Naive thymus-derived CD4-positive, alpha-beta T cell (primary cell): ENCODE measurements at regions of chr14 and their contacts with region 1.

Region 1: GRCh38 chr14:97602438-97603117 is 805.4 kb downstream of the VRK1 start:
- DNase-seq: peak; percentile 39 to 92 (median 89)
- ATAC-seq: peak; percentile 94
- H3K4me3 ChIP-seq: peak overlapping the region; percentile 37
- H3K4me3 Mint-ChIP-seq: no peak overlapping the region
- H3K27ac ChIP-seq: peak overlapping the region; percentile 80
- H3K27ac Mint-ChIP-seq: no peak overlapping the region
- H3K4me1 ChIP-seq: peaks cover 57 to 64% of the 10 kb centered on the region in 2 donors
- H3K4me1 Mint-ChIP-seq: peaks cover 0 to 31% (median 4%) of the 10 kb centered on the region in 7 donors
- H3K27me3 ChIP-seq: no peaks in the 10 kb centered on the region
- H3K27me3 Mint-ChIP-seq: no peaks in the 10 kb centered on the region

Region 2: DNA sequence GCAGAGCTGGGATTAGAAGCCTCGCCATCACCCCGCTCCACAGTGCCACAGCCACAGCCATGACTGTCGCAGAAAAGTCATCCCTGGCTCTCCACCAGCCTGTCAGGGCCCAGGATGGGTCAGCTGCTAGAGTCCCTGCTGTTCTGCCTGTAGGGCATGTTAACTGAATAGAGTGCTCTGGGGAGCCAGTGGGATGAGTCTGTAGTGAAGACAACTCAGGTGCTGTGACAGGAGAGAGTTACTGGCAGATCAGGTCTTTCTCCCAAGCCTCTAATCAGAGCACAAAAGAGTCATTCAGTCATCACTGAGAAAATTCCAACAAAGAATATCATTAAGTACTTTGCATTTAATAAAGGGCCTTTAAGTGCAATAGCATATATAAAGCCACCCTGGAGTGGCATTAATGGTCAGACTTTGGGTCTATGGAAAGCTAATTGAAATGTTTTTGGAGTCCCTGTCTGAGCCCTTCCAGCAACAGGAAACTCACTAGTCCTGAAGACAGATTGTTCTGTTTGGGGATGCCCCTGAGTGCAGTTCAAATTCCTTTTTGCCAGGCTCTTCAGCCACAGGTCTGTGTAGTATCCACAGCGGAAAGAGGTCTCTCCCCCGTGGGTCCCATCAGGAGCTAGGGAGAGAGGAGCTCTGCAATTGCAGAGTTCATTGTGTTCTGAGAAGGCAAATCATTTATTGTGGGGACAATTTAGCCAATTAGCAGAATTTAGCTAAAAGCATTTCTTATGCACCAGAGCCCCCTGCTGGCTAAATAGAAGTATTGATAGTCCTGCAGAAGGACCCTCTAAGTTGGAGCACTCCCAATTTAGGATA is 1608.6 kb before region 1 on chr14:
- CTCF ChIA-PET with region 1: no interaction called
- POLR2A ChIA-PET with region 1: no interaction called
- intact Hi-C with region 1: no loop called
- DNase-seq: peak in 7 of 9 donors; percentile 5 to 45 (median 37)
- ATAC-seq: no peak
- H3K4me3 ChIP-seq: no peak overlapping the region
- H3K4me3 Mint-ChIP-seq: no peak overlapping the region
- H3K27ac ChIP-seq: no peak overlapping the region
- H3K27ac Mint-ChIP-seq: no peak overlapping the region
- H3K4me1 ChIP-seq: no peaks in the 10 kb centered on the region
- H3K4me1 Mint-ChIP-seq: no peaks in the 10 kb centered on the region
- H3K27me3 ChIP-seq: no peaks in the 10 kb centered on the region
- H3K27me3 Mint-ChIP-seq: peaks cover 17 to 70% (median 55%) of the 10 kb centered on the region in 5 donors

Region 3: DNA sequence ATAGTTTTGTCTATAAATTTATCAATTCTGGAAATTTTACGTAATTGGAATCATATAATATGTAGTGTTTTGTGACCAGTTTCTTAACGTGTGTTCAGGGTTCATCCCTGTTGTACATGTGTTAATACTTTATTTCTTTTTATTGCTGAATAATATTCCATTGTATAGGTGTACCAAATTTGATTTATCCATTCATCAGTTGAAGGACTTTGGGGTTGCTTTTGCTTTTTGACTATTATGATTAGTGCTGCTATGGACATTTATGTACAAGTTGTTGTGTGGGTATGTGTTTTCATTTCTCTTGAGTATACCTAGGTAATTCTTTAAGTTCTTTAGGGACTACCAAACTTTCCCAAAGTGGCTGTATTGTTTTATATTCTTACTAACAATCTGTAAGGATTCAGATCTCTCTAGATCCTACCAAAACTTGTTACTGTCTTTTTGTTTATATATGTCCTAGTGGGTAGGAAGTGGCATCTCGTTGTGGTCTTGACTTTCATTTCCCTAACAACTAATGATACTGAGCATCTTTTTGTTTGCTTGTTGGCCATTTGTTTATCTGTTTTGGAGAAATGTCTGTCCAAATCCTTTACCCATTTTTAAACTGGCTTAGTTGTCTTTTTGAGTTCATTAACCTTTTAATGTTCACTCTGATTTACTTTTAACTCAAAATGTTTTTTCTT is 790.5 kb before region 1 on chr14:
- CTCF ChIA-PET with region 1: no interaction called
- POLR2A ChIA-PET with region 1: no interaction called
- intact Hi-C with region 1: no loop called
- DNase-seq: no peak
- ATAC-seq: no peak
- H3K4me3 ChIP-seq: no peak overlapping the region
- H3K4me3 Mint-ChIP-seq: peak overlapping the region in 2 of 10 donors; percentile 4 to 15
- H3K27ac ChIP-seq: no peak overlapping the region
- H3K27ac Mint-ChIP-seq: no peak overlapping the region
- H3K4me1 ChIP-seq: peaks cover 0 to 12% of the 10 kb centered on the region in 2 donors
- H3K4me1 Mint-ChIP-seq: peaks cover 25 to 64% (median 51%) of the 10 kb centered on the region in 7 donors
- H3K27me3 ChIP-seq: no peaks in the 10 kb centered on the region
- H3K27me3 Mint-ChIP-seq: no peaks in the 10 kb centered on the region

Region 4: GRCh38 chr14:97177015-97177414 is 425.6 kb before region 1 on chr14:
- CTCF ChIA-PET with region 1: no interaction called
- POLR2A ChIA-PET with region 1: no interaction called
- intact Hi-C with region 1: loop called in 1 of 2 experiments (anchors 1 kb)
- DNase-seq: peak in 7 of 9 donors; percentile 36 to 63 (median 49)
- ATAC-seq: peak; percentile 67
- H3K4me3 ChIP-seq: no peak overlapping the region
- H3K4me3 Mint-ChIP-seq: peak overlapping the region in 4 of 10 donors; percentile 28 to 51 (median 36)
- H3K27ac ChIP-seq: no peak overlapping the region
- H3K27ac Mint-ChIP-seq: peak overlapping the region in 5 of 9 donors; percentile 32 to 78 (median 63)
- H3K4me1 ChIP-seq: peaks cover 0 to 3% of the 10 kb centered on the region in 2 donors
- H3K4me1 Mint-ChIP-seq: peaks cover 0 to 41% (median 32%) of the 10 kb centered on the region in 7 donors
- H3K27me3 ChIP-seq: no peaks in the 10 kb centered on the region
- H3K27me3 Mint-ChIP-seq: peaks cover 0 to 2% (median 0%) of the 10 kb centered on the region in 5 donors

Region 5: GRCh38 chr14:97410667-97411620 is 191.6 kb before region 1 on chr14:
- CTCF ChIA-PET with region 1: no interaction called
- POLR2A ChIA-PET with region 1: interaction called, 4 read pairs
- intact Hi-C with region 1: loop called in 1 of 2 experiments (anchors 2 kb)
- DNase-seq: peak in 1 of 9 donors; percentile 9
- ATAC-seq: no peak
- H3K4me3 ChIP-seq: no peak overlapping the region
- H3K4me3 Mint-ChIP-seq: no peak overlapping the region
- H3K27ac ChIP-seq: no peak overlapping the region
- H3K27ac Mint-ChIP-seq: no peak overlapping the region
- H3K4me1 ChIP-seq: peaks cover 15 to 34% of the 10 kb centered on the region in 2 donors
- H3K4me1 Mint-ChIP-seq: peaks cover 0 to 30% (median 21%) of the 10 kb centered on the region in 7 donors
- H3K27me3 ChIP-seq: peaks cover 0 to 6% of the 10 kb centered on the region in 2 donors
- H3K27me3 Mint-ChIP-seq: peaks cover 0 to 11% (median 1%) of the 10 kb centered on the region in 5 donors

Region 6: GRCh38 chr14:97634751-97635150 is 32.2 kb after region 1 on chr14:
- CTCF ChIA-PET with region 1: no interaction called
- POLR2A ChIA-PET with region 1: interaction called, 6 read pairs
- intact Hi-C with region 1: loop called in 1 of 2 experiments (anchors 2 kb)
- DNase-seq: peak in 7 of 9 donors; percentile 45 to 73 (median 64)
- ATAC-seq: peak; percentile 79
- H3K4me3 ChIP-seq: peak overlapping the region; percentile 50
- H3K4me3 Mint-ChIP-seq: peak overlapping the region; percentile 79 to 99 (median 88)
- H3K27ac ChIP-seq: peak overlapping the region; percentile 59
- H3K27ac Mint-ChIP-seq: peak overlapping the region; percentile 77 to 98 (median 91)
- H3K4me1 ChIP-seq: peaks cover 0 to 25% of the 10 kb centered on the region in 2 donors
- H3K4me1 Mint-ChIP-seq: peaks cover 39 to 78% (median 66%) of the 10 kb centered on the region in 7 donors
- H3K27me3 ChIP-seq: no peaks in the 10 kb centered on the region
- H3K27me3 Mint-ChIP-seq: peaks cover 0 to 15% (median 0%) of the 10 kb centered on the region in 5 donors

Region 7: GRCh38 chr14:97776934-97777558 is 174.5 kb after region 1 on chr14:
- CTCF ChIA-PET with region 1: interaction called, 4 read pairs
- POLR2A ChIA-PET with region 1: interaction called, 3 read pairs
- intact Hi-C with region 1: loop called in 1 of 2 experiments (anchors 1 kb)
- DNase-seq: peak in 4 of 9 donors; percentile 3 to 27 (median 21)
- ATAC-seq: peak; percentile 46
- H3K4me3 ChIP-seq: no peak overlapping the region
- H3K4me3 Mint-ChIP-seq: peak overlapping the region in 6 of 10 donors; percentile 37 to 76 (median 46)
- H3K27ac ChIP-seq: no peak overlapping the region
- H3K27ac Mint-ChIP-seq: peak overlapping the region in 6 of 9 donors; percentile 32 to 86 (median 53)
- H3K4me1 ChIP-seq: peaks cover 0 to 14% of the 10 kb centered on the region in 2 donors
- H3K4me1 Mint-ChIP-seq: peaks cover 9 to 35% (median 28%) of the 10 kb centered on the region in 7 donors
- H3K27me3 ChIP-seq: no peaks in the 10 kb centered on the region
- H3K27me3 Mint-ChIP-seq: no peaks in the 10 kb centered on the region